ENCODE measurements at regions of chr4 and their contacts with region 1.

Region 1: DNA sequence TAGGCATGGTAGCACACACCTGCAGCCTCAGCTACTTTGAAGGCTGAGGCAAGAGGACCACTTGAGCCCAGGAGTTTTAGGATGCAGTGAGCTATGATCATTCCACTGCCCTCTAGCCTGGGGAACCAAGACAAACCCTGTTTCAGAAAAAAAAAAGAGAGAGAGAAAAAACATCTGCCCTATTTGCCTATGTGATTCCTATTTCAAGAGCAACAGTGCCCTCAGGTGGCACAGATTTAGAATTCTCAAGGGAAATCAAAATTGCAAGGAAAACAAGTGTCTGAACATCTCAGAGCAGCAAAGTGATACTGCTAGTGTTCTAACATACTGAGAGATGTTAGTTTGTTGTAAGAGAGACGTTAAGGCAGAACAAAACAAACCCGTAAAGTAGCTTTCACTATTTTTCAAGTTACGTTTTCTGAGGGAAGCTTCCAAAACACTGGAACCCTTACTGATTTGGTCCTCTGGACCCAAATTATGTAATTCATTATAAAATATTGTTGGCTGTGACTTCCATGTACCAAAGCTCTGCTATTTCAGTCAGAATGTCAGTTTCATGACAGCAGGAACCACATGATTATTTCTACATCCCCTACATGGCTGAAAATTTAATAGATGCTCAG is 7.9 kb downstream of the BDH2 start:
- DNase-seq: peak; percentile 32
- H3K4me3 ChIP-seq: no peak overlapping the region
- H3K27ac ChIP-seq: no peak overlapping the region
- H3K27me3 ChIP-seq: no peaks in the 10 kb centered on the region
- CTCF ChIP-seq: peak; percentile 73

Region 2: DNA sequence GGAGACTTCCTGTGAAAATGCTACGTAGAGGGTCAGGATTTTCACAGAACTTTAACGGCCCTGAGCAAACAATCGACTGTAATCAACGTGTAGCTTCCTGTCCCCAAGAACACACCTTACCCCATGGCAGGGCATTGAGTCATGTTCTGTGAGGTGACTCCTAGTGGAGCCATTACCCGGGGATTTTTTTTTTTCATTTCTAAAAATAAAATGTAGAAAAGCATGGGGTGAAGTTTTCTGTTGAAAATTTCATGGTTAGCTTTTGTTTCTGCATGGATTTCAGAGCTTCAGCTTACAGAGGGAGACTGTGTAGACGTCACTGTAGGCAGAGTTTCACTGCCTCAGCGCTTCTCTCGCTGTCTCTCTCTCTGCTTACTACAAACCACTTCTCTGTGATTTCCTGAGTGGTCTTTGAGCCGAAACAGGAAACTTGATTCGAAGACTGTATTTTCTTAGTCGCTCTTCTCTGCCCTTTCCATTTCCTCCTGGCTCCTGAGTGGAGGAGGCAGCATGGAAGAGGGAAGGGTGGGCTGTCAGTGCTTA is 478.8 kb before region 1 on chr4:
- CTCF ChIA-PET with region 1: interaction called, 10 read pairs
- POLR2A ChIA-PET with region 1: no interaction called
- DNase-seq: no peak
- H3K4me3 ChIP-seq: no peak overlapping the region
- H3K27ac ChIP-seq: peak overlapping the region; percentile 11
- H3K27me3 ChIP-seq: no peaks in the 10 kb centered on the region
- CTCF ChIP-seq: no peak

Region 3: DNA sequence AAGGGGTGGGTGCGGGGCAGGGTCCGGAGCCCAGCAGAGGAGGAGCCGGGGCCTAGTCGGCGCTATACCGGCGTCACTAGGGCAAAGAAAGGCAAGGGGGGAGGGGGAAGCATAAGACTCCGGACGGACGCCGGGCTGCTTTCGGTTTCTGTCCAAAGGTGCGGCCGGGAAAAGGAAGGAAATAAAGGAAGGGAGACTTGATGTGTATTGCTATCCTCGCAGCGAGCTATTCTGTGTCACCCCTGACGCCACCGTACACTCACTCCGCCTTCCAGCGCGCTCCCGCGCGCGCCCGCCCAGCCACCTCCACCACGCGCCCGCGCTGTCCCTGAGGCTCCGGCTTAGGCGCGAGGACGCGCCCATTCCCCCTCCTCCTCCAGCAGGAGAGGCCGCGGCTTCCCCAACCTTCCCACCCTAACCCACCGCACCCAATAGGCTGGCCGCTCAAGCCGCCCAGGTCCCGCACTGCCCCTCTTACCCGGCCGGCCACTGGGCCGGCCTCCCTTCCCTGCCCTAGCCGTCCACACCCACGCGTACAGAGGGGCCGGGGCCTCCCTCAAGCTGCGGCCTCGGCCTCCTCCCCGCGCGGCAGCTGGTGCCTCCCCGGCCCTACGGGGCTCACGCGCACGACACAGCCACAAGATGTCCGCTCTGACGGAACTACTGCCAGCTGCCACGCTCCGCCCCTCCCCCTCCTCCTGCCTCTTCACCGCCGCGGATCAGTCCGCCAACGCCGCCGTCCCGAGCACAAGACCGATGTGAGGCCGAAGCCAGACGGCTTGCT is 264.6 kb before region 1 on chr4 and contains the start of gene UBE2D3:
- CTCF ChIA-PET with region 1: interaction called, 10 read pairs
- POLR2A ChIA-PET with region 1: interaction called, 3 read pairs
- DNase-seq: peak; percentile 95
- H3K4me3 ChIP-seq: peak within 1 kb of the TSS; percentile 92
- H3K27ac ChIP-seq: peak within 1 kb of the TSS; percentile 100
- H3K27me3 ChIP-seq: no peaks in the 10 kb centered on the region
- CTCF ChIP-seq: no peak
- polyA plus RNA-seq, gene UBE2D3: 381 and 534 TPM in 2 replicates

Region 4: GRCh38 chr4:103046416-103047290 is 45.1 kb before region 1 on chr4:
- CTCF ChIA-PET with region 1: interaction called, 44 read pairs
- POLR2A ChIA-PET with region 1: no interaction called
- DNase-seq: no peak
- H3K4me3 ChIP-seq: no peak overlapping the region
- H3K27ac ChIP-seq: no peak overlapping the region
- H3K27me3 ChIP-seq: no peaks in the 10 kb centered on the region
- CTCF ChIP-seq: peak; percentile 79